ENCODE measurements at regions of chr2 and their contacts with region 1.

Region 1: DNA sequence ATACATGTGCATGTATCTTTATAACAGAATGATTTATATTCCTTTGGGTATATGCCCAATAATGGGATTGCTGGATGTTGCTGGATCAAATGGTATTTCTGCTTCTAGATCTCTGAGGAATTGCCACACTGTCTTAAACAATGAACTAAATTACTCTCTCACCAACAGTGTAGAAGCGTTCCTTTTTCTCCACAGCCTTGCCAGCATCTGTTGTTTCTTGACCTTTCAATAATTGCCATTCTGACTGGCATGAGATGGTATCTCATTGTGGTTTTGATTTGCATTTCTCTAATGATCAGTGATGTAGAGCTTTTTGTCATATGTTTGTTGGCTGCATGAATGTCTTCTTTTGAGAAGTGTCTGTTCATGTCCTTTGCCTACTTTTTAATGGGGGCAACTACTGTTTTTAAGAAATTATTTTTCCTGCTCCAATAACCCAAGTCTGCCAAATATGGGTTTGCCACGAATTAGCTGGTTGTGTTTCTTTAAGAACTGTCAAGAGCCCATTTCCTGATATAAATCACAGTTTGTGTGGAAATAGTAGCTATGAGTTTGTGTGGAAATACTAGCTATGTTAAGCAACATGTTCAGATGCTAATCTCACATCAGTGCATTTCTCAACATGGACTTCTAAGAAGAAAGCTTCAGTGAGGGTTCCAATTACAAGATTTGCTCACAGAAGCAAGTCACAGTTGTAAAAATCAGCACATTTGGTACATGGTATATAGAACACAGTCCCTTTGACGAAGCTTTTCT is 259.4 kb downstream of the ANAPC1 start:
- DNase-seq: no peak
- H3K4me3 Mint-ChIP-seq: no peak overlapping the region
- H3K27ac Mint-ChIP-seq: peak overlapping the region; percentile 58
- H3K4me1 Mint-ChIP-seq: peaks cover 36% of the 10 kb centered on the region
- H3K27me3 Mint-ChIP-seq: peaks cover 27% of the 10 kb centered on the region

Region 2: GRCh38 chr2:111659416-111660281 is 35.1 kb after region 1 on chr2:
- intact Hi-C with region 1: loop called (anchors 5 kb)
- DNase-seq: no peak
- H3K4me3 Mint-ChIP-seq: no peak overlapping the region
- H3K27ac Mint-ChIP-seq: no peak overlapping the region
- H3K4me1 Mint-ChIP-seq: peaks cover 13% of the 10 kb centered on the region
- H3K27me3 Mint-ChIP-seq: peaks cover 55% of the 10 kb centered on the region

Region 3: GRCh38 chr2:111698743-111699554 is 74.4 kb after region 1 on chr2:
- intact Hi-C with region 1: loop called (anchors 1 kb)
- DNase-seq: peak; percentile 60
- H3K4me3 Mint-ChIP-seq: peak overlapping the region; percentile 35
- H3K27ac Mint-ChIP-seq: peak overlapping the region; percentile 87
- H3K4me1 Mint-ChIP-seq: peaks cover 43% of the 10 kb centered on the region
- H3K27me3 Mint-ChIP-seq: peaks cover 14% of the 10 kb centered on the region

Region 4: DNA sequence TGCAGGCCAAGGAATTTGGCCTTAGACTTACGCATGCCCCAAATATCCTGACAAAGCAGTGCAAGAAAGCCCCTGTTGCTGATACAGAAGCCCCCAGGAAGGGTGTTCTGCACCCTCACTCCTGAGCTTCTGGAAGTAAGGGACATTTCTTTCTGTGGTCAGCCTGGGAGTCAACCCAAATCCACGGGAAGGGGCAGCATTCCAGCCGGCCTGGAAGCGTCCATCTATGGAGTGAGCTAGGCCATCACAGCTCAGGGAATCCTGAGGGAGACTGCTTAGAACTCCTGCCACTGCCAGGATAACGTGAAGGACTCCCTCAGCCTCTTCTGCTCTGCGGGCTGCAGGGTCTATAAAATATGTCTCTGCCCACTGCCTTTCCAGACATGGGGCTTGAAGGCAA is 85.5 kb after region 1 on chr2:
- intact Hi-C with region 1: no loop called
- DNase-seq: no peak
- H3K4me3 Mint-ChIP-seq: no peak overlapping the region
- H3K27ac Mint-ChIP-seq: no peak overlapping the region
- H3K4me1 Mint-ChIP-seq: peaks cover 16% of the 10 kb centered on the region
- H3K27me3 Mint-ChIP-seq: peaks cover 18% of the 10 kb centered on the region